Tibial artery (tissue), 4 donors: ENCODE measurements at regions of chr1 and their contacts with region 1.

Region 1: DNA sequence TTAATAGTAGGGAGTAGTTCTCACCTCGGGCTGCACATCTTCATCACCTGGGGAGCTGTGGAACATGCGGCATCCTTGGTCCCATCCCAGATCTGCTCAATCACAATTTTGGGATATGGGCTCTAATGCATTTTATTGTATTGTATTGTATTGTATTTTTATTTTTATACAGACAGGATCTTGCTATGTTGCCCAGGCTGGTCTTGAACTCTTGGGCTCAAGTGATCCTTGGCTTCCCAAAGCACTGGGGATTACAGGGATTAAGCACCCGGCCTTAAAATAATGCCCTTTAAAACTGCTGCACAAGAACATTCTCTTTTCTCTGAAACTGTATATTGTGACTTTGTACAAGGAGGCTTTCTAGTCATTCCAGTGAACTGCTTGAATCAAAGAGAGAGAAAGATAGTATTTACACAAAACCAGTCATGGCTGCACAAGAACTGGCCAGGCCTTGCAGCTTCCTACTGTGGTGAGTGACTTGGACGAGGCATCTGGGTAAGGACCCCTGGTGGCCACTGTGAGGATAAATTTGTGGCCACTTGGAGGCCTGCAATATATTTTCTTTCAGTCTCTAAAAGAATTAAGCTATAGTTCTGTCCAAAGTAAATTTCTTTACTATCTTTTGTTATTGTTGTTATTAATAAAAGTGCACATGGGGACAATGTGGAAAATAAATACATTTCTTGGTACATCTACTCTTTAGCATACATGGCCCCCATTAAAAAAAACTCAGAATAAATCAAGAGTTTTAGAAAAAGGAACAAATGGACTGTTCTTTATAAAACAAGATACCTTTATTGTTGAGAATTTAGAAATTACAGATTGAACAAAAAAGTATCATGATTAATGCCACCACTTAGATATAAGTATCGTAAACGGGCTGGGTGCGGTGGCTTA is 48.0 kb downstream of the TBCE start:
- DNase-seq: peak; percentile 58 to 75
- H3K4me3 ChIP-seq: no peak overlapping the region
- H3K27ac ChIP-seq: no peak overlapping the region
- H3K4me1 ChIP-seq: peaks cover 0 to 5% (median 4%) of the 10 kb centered on the region in 4 donors
- H3K27me3 ChIP-seq: no peaks in the 10 kb centered on the region
- CTCF ChIP-seq: peak; percentile 56 to 63

Region 2: GRCh38 chr1:235100194-235100772 is 315.0 kb before region 1 on chr1:
- intact Hi-C with region 1: loop called (anchors 5 kb)
- DNase-seq: no peak
- H3K4me3 ChIP-seq: no peak overlapping the region
- H3K27ac ChIP-seq: no peak overlapping the region
- H3K4me1 ChIP-seq: peaks cover 0 to 15% (median 0%) of the 10 kb centered on the region in 4 donors
- H3K27me3 ChIP-seq: peaks cover 0 to 4% of the 10 kb centered on the region in 2 donors
- CTCF ChIP-seq: no peak

Region 3: DNA sequence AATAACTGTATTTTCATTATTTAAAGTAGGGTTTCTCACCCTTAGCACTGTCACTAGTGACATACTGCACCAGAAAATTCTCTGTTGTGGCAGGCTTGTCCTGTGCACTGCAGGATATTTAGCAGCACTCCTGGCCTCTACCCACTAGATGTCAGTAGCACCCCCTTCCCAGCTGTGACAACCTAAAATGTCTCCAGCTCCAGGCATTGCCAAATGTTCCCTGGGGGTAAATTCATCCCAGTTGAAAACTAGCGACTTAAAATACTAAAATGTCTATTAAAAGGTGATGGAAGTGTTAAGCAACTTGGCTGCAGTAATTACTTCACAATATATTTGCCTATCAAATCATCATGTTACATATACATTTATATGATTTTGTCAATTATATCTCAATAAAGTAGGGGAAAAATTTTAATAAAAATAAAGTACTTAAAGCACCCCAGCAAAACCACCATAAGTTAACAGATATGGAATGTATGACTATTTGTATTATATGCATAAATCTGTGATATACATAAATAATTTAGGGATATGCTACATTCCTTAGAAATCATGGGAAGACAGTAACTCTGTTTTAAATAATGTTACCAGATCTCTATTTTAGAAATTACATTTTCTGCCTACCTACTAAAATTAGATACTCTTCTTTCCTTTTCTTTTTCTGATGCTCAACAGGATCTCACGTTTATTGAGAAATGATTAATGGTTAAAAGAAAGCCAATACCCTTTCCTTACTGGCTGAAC is 161.9 kb before region 1 on chr1:
- intact Hi-C with region 1: loop called (anchors 2 kb)
- DNase-seq: peak in 1 of 2 donors; percentile 43
- H3K4me3 ChIP-seq: no peak overlapping the region
- H3K27ac ChIP-seq: no peak overlapping the region
- H3K4me1 ChIP-seq: peaks cover 0 to 7% (median 2%) of the 10 kb centered on the region in 4 donors
- H3K27me3 ChIP-seq: no peaks in the 10 kb centered on the region
- CTCF ChIP-seq: peak; percentile 72 to 82